Endothelial cell of umbilical vein (primary cell): ENCODE measurements at regions of chr18 and their contacts with region 1.

Region 1: GRCh38 chr18:6920099-6920899 is 190.8 kb downstream of the ARHGAP28 start:
- DNase-seq: peak; percentile 64
- H3K4me3 ChIP-seq: no peak overlapping the region
- H3K27ac ChIP-seq: no peak overlapping the region
- H3K4me1 ChIP-seq: no peaks in the 10 kb centered on the region
- H3K27me3 ChIP-seq: no peaks in the 10 kb centered on the region
- CTCF ChIP-seq: peak; percentile 71 to 75
- POLR2A ChIP-seq: no peak

Region 2: DNA sequence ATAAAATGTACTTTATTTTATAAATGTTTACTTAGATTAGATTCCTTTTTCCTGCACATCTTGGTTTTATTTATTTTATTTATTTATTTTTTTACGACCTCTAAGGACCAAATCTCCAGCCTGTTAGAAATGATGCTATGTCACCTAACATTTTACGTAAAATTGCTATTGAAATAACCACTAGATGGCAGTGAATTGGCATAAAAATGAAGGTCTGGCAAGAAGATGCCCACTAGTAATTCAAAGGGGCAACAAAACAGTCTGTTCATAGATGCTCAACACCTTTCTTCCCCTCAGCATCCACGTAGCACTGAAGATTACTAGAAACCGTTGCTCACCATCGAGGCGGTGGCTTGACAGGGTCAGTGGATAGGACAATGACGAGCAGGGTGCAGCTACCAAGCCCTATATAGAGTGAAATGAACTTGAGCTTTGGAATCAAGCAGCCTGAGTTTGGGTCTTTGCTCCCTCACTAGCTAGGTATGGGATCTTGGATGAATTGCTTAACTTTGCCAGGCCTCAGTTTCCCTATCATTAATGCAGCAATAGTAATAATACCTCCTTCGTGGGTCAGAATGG is 376.9 kb before region 1 on chr18:
- CTCF ChIA-PET with region 1: interaction called, 11 read pairs
- POLR2A ChIA-PET with region 1: no interaction called
- dilution Hi-C with region 1: no loop called
- intact Hi-C with region 1: no loop called
- DNase-seq: peak; percentile 60
- H3K4me3 ChIP-seq: no peak overlapping the region
- H3K27ac ChIP-seq: no peak overlapping the region
- H3K4me1 ChIP-seq: peaks cover 9% of the 10 kb centered on the region
- H3K27me3 ChIP-seq: no peaks in the 10 kb centered on the region
- CTCF ChIP-seq: peak; percentile 23 to 26
- POLR2A ChIP-seq: no peak

Region 3: GRCh38 chr18:7000484-7001096 is 80.3 kb after region 1 on chr18:
- CTCF ChIA-PET with region 1: interaction called, 9 read pairs
- POLR2A ChIA-PET with region 1: no interaction called
- dilution Hi-C with region 1: no loop called
- intact Hi-C with region 1: loop called (anchors 1 kb)
- DNase-seq: peak; percentile 9
- H3K4me3 ChIP-seq: no peak overlapping the region
- H3K27ac ChIP-seq: no peak overlapping the region
- H3K4me1 ChIP-seq: no peaks in the 10 kb centered on the region
- H3K27me3 ChIP-seq: no peaks in the 10 kb centered on the region
- CTCF ChIP-seq: peak in 1 of 2 donors; percentile 43
- POLR2A ChIP-seq: no peak

Region 4: DNA sequence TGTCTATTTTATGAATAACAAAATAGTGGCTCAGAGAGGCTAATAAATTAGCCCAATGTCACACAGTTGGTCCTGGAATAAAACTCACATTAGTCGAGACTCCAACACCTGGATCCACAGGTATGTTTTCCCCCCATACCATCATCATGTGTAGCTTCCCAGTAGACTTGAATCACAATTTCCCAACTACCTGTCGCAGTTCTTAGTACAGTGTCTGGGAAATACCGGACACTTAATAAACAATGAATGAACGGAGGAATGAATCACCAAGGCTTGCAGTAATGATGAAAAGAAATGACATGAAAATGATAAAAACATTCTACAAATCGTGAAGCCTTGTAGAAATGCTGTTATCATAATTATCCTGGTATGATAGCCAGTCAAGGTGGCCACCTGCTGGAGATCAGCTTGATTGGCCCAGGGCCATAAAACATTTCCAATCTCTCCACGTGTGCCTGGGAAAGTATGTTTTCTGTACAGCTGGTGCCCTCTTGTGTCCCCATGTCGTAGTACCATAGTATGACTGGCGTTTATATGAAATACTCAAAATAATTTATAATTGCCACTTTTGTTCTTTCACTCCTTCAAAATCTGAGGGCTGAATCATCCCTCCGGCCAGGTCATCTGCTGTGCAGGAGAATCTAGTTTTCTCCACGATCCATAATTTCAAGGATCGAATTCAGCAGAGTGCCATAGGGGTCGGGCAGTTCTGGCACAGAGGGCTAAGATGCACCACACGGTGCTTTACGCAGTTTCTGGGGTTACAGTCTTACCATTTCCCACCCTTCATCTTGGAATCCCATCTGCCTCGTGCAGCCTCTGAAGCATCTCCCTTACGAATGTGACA is 101.9 kb after region 1 on chr18:
- CTCF ChIA-PET with region 1: interaction called, 14 read pairs
- POLR2A ChIA-PET with region 1: no interaction called
- dilution Hi-C with region 1: no loop called
- intact Hi-C with region 1: loop called (anchors 1 kb)
- DNase-seq: peak; percentile 47
- H3K4me3 ChIP-seq: no peak overlapping the region
- H3K27ac ChIP-seq: no peak overlapping the region
- H3K4me1 ChIP-seq: no peaks in the 10 kb centered on the region
- H3K27me3 ChIP-seq: no peaks in the 10 kb centered on the region
- CTCF ChIP-seq: peak; percentile 26 to 31
- POLR2A ChIP-seq: no peak

Region 5: DNA sequence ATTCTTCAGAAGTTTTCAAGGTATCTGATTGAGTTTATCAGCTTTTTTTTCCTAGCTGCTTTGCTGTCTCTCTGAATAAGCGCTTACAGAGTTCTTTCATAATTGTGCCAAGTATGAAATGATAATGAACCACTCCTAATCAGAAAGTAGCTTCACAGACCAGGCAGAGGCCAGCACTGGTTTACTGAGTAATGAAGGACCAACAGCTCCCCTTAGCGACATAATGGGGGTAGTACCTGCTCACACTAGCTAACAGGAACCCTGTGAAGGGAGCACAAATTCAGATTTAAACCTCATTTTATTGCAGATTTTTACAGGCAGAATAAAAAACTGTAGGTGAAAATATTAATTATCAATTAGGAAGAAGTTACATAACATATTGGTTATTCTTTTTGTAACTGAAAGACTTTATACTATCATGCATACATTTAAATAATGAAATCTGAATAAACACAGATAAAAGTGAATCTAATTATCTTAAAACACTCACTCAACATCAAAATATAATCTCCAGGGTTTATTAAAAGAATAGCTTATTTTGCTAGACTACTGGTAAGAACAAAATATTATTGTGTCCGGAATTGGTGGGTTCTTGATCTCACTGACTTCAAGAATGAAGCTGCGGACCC is 256.9 kb after region 1 on chr18:
- CTCF ChIA-PET with region 1: interaction called, 153 read pairs
- POLR2A ChIA-PET with region 1: no interaction called
- dilution Hi-C with region 1: no loop called
- intact Hi-C with region 1: loop called (anchors 1 kb)
- DNase-seq: peak; percentile 49
- H3K4me3 ChIP-seq: no peak overlapping the region
- H3K27ac ChIP-seq: no peak overlapping the region
- H3K4me1 ChIP-seq: no peaks in the 10 kb centered on the region
- H3K27me3 ChIP-seq: no peaks in the 10 kb centered on the region
- CTCF ChIP-seq: peak; percentile 46 to 64
- POLR2A ChIP-seq: no peak